H1 (cell line): ENCODE measurements at regions of chr7 and their contacts with region 1.

Region 1: GRCh38 chr7:36291387-36292316 is 98.0 kb upstream of the ANLN start:
- DNase-seq: peak in 1 of 2 experiments; percentile 89
- H3K4me3 ChIP-seq: no peak overlapping the region
- H3K27ac ChIP-seq: no peak overlapping the region
- H3K4me1 ChIP-seq: peaks cover 4 to 10% (median 6%) of the 10 kb centered on the region in 4 experiments; a peak in 5 of 7 replicates
- H3K27me3 ChIP-seq: no peaks in the 10 kb centered on the region
- CTCF ChIP-seq: peak; percentile 88 to 96 (median 95)
- EP300 ChIP-seq: no peak
- POLR2A ChIP-seq: no peak
- RAD21 ChIP-seq: peak; percentile 98 to 100

Region 2: DNA sequence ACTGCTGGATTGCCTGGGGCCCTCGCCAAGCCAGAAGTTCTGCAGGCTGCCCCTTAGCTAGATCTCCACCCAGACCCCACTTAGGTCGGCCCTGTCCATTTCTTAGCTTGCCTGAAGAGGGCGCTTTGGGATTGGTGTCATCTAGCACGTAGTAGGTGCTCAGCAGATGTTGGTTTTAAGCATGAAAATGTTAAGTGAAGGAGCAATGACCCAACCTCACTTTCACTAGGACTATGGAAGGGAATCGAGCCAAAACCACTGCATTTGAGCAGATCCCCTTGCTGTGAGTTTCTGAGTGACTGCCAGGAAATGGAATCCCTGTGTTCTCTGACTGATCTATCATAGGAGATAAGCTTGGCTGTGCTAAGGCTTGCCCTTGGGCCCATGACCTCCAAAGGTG is 270.3 kb before region 1 on chr7:
- CTCF ChIA-PET with region 1: interaction called, 23 read pairs
- POLR2A ChIA-PET with region 1: no interaction called
- DNase-seq: peak in 1 of 2 experiments; percentile 73
- H3K4me3 ChIP-seq: no peak overlapping the region
- H3K27ac ChIP-seq: no peak overlapping the region
- H3K4me1 ChIP-seq: no peaks in the 10 kb centered on the region; a peak in 1 of 7 replicates
- H3K27me3 ChIP-seq: no peaks in the 10 kb centered on the region
- CTCF ChIP-seq: peak; percentile 74 to 90 (median 88)
- EP300 ChIP-seq: no peak
- POLR2A ChIP-seq: no peak
- RAD21 ChIP-seq: peak; percentile 80 to 94

Region 3: GRCh38 chr7:36128448-36129047 is 163.1 kb before region 1 on chr7:
- CTCF ChIA-PET with region 1: interaction called, 10 read pairs
- POLR2A ChIA-PET with region 1: no interaction called
- DNase-seq: peak in 1 of 2 experiments; percentile 60
- H3K4me3 ChIP-seq: no peak overlapping the region
- H3K27ac ChIP-seq: no peak overlapping the region
- H3K4me1 ChIP-seq: no peaks in the 10 kb centered on the region
- H3K27me3 ChIP-seq: no peaks in the 10 kb centered on the region
- CTCF ChIP-seq: peak in 1 of 3 experiments; percentile 41; a peak in 2 of 4 replicates
- EP300 ChIP-seq: no peak
- POLR2A ChIP-seq: no peak
- RAD21 ChIP-seq: no peak

Region 4: DNA sequence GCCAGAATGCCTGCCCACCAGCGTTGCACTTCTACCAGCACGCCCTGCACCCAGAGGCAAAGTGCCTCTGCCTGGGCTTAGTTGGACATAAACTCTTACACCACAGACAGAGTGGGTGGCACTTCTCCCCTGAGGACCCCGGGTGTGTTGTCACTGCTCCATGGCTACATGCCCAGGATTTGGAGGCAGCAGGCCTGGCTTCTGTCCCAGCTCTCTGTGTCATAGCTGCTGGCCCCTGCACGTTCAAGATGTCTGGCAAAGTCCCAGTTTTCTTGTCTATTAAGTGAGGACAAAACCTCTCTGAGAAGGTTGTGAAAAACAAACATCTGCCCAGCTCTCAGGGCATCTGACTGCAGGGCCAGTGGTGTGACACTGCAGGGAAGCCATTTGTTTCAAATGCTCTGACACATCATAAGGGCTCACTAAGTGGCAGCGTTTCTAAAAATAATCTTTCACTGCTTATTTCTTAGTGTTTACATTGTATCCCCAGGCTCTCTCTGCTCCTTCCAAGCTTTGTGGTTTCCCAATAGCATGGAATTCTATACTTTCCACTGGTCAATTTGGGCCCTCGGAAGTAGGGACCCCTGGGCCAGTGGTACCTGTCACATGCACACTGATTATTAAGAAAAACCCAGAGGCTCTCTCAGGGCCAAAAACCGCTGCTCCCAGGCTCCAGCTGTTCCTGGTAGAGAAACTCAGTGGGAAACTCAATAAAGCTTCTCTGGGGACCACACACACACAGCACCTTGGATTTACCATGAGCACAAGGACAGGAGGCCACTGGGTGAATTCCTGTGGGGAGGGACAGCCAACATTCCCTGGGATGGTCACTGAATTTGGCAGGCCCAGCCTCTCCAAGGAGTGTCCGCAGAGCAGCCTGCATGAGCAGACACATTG is 11.8 kb after region 1 on chr7:
- CTCF ChIA-PET with region 1: interaction called, 30 read pairs
- POLR2A ChIA-PET with region 1: no interaction called
- DNase-seq: no peak
- H3K4me3 ChIP-seq: no peak overlapping the region
- H3K27ac ChIP-seq: no peak overlapping the region
- H3K4me1 ChIP-seq: peaks cover 0 to 6% (median 0%) of the 10 kb centered on the region in 4 experiments; a peak in 2 of 7 replicates
- H3K27me3 ChIP-seq: no peaks in the 10 kb centered on the region
- CTCF ChIP-seq: no peak
- EP300 ChIP-seq: no peak
- POLR2A ChIP-seq: no peak
- RAD21 ChIP-seq: no peak